ENCODE measurements at regions of chr5 and their contacts with region 1.

Region 1: DNA sequence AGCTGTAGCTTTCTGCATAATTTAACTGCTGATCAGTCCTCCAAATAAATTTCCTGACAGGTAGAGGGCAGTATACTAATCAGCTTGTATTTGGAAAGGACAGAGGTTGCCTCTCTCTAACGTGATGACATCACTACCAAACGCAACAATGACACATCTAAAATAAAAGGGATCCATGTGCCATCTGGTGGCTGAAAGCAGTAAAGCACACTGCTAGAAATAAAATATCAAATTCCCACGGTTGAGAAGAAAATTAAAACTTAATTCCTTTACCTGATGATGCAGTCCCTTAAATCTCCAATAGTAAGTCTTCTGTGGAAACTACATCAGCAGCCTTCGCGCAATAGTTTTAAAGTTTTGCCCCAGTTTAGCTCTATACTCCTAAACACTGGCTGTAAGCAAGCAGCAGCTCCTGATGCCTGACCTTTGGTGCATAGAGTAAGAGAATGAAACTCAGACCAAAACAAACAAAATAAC is 54.5 kb downstream of the DIAPH1 start:
- DNase-seq: peak; percentile 91
- ATAC-seq: peak; percentile 97
- H3K4me3 ChIP-seq: no peak overlapping the region
- H3K4me3 Mint-ChIP-seq: no peak overlapping the region
- H3K27ac ChIP-seq: peak overlapping the region; percentile 5 to 46
- H3K27ac Mint-ChIP-seq: peak overlapping the region; percentile 70
- H3K4me1 ChIP-seq: no peaks in the 10 kb centered on the region
- H3K4me1 Mint-ChIP-seq: peaks cover 4% of the 10 kb centered on the region
- H3K27me3 ChIP-seq: no peaks in the 10 kb centered on the region
- H3K27me3 Mint-ChIP-seq: no peaks in the 10 kb centered on the region
- CTCF ChIP-seq: peak; percentile 93

Region 2: DNA sequence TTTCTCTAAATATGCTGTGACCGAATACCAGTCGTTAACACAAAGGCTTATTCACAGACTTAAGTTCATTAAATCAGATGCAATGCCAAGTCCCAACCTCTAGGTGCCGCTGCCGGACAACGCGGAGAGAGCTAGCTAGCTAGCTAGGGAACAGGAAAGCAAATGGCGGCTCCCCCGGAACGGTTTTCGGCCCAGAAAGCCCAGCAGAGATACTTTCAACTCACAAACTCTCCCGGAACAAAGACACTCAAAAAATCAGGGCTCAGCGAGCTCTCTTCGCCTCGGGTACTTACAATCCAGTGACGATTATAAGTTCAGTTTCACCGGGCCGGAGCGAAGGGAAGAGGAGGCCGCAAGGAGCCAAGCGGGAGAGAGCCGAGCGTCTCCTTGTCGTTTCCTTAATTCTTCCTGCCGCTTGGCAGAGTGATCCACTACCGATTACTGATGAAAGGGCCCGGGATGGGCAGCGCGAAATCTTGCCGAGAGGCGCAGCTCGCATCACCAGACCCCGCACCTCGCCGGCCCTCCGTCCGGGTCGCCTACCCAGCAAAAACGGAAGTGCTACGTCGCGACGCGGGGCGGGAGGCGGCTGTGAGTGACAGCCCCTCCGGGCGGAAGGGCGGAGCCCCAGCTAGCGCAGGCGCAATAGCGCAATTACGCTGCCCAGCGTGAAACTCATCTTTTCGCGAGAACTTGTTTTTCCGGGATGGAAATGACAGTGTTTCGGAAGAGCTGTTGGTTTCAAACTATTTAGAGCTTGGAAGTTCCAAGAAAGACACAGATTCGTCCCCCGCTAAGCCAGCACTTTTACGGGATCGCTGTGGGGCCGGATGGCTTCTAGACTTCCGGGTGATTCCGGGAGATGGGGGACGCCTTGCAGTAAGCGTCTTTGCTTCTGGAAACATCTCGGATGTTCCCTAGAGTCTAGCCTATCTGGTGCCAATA is 243.8 kb before region 1 on chr5 and contains the start of gene TAF7:
- CTCF ChIA-PET with region 1: interaction called, 37 read pairs
- POLR2A ChIA-PET with region 1: interaction called, 6 read pairs
- intact Hi-C with region 1: loop called (anchors 1 kb)
- DNase-seq: peak; percentile 96
- ATAC-seq: peak; percentile 90
- H3K4me3 ChIP-seq: peak within 1 kb of the TSS; percentile 78 to 100 (median 97)
- H3K4me3 Mint-ChIP-seq: peak within 1 kb of the TSS; percentile 96
- H3K27ac ChIP-seq: peak within 1 kb of the TSS; percentile 95 to 96
- H3K27ac Mint-ChIP-seq: peak within 1 kb of the TSS; percentile 98
- H3K4me1 ChIP-seq: peaks cover 17 to 20% of the 10 kb centered on the region in 2 donors
- H3K4me1 Mint-ChIP-seq: peaks cover 28% of the 10 kb centered on the region
- H3K27me3 ChIP-seq: no peaks in the 10 kb centered on the region
- H3K27me3 Mint-ChIP-seq: no peaks in the 10 kb centered on the region
- CTCF ChIP-seq: peak; percentile 89
- total RNA-seq, gene TAF7: 119 TPM in 2 replicates

Region 3: GRCh38 chr5:141392429-141393198 is 171.6 kb before region 1 on chr5 and contains the start of gene PCDHGA8:
- CTCF ChIA-PET with region 1: interaction called, 13 read pairs
- POLR2A ChIA-PET with region 1: no interaction called
- intact Hi-C with region 1: no loop called
- DNase-seq: no peak
- ATAC-seq: no peak
- H3K4me3 ChIP-seq: no peak within 1 kb of the TSS
- H3K4me3 Mint-ChIP-seq: no peak within 1 kb of the TSS
- H3K27ac ChIP-seq: no peak within 1 kb of the TSS
- H3K27ac Mint-ChIP-seq: no peak within 1 kb of the TSS
- H3K4me1 ChIP-seq: no peaks in the 10 kb centered on the region
- H3K4me1 Mint-ChIP-seq: no peaks in the 10 kb centered on the region
- H3K27me3 ChIP-seq: peaks cover 0 to 61% (median 38%) of the 10 kb centered on the region in 4 experiments
- H3K27me3 Mint-ChIP-seq: peaks cover 60% of the 10 kb centered on the region
- CTCF ChIP-seq: no peak
- total RNA-seq, gene PCDHGA8: 1.2 and 1.3 TPM in 2 replicates

Region 4: GRCh38 chr5:141430332-141431113 is 133.7 kb before region 1 on chr5 and contains the start of gene PCDHGA12:
- CTCF ChIA-PET with region 1: interaction called, 31 read pairs
- POLR2A ChIA-PET with region 1: interaction called, 7 read pairs
- intact Hi-C with region 1: no loop called
- DNase-seq: peak; percentile 65
- ATAC-seq: peak; percentile 82
- H3K4me3 ChIP-seq: peak within 1 kb of the TSS in 4 of 5 experiments; percentile 30 to 35 (median 32)
- H3K4me3 Mint-ChIP-seq: peak within 1 kb of the TSS; percentile 86
- H3K27ac ChIP-seq: no peak within 1 kb of the TSS
- H3K27ac Mint-ChIP-seq: peak within 1 kb of the TSS; percentile 29
- H3K4me1 ChIP-seq: peaks cover 15 to 17% of the 10 kb centered on the region in 2 donors
- H3K4me1 Mint-ChIP-seq: peaks cover 7% of the 10 kb centered on the region
- H3K27me3 ChIP-seq: peaks cover 0 to 57% (median 30%) of the 10 kb centered on the region in 4 experiments
- H3K27me3 Mint-ChIP-seq: peaks cover 46% of the 10 kb centered on the region
- CTCF ChIP-seq: peak; percentile 68
- total RNA-seq, gene PCDHGA12: 1.6 and 2.8 TPM in 2 replicates

Region 5: GRCh38 chr5:141501761-141502160 is 62.5 kb before region 1 on chr5:
- CTCF ChIA-PET with region 1: no interaction called
- POLR2A ChIA-PET with region 1: no interaction called
- intact Hi-C with region 1: no loop called
- DNase-seq: no peak
- ATAC-seq: no peak
- H3K4me3 ChIP-seq: no peak overlapping the region
- H3K4me3 Mint-ChIP-seq: no peak overlapping the region
- H3K27ac ChIP-seq: no peak overlapping the region
- H3K27ac Mint-ChIP-seq: no peak overlapping the region
- H3K4me1 ChIP-seq: peaks cover 0 to 3% of the 10 kb centered on the region in 2 donors
- H3K4me1 Mint-ChIP-seq: peaks cover 7% of the 10 kb centered on the region
- H3K27me3 ChIP-seq: no peaks in the 10 kb centered on the region
- H3K27me3 Mint-ChIP-seq: peaks cover 6% of the 10 kb centered on the region
- CTCF ChIP-seq: no peak

Region 6: GRCh38 chr5:141598391-141599350 is 34.4 kb after region 1 on chr5:
- CTCF ChIA-PET with region 1: interaction called, 26 read pairs
- POLR2A ChIA-PET with region 1: no interaction called
- intact Hi-C with region 1: no loop called
- DNase-seq: no peak
- ATAC-seq: no peak
- H3K4me3 ChIP-seq: no peak overlapping the region
- H3K4me3 Mint-ChIP-seq: peak overlapping the region; percentile 12
- H3K27ac ChIP-seq: peak overlapping the region in 1 of 2 donors; percentile 61
- H3K27ac Mint-ChIP-seq: no peak overlapping the region
- H3K4me1 ChIP-seq: peaks cover 23 to 40% of the 10 kb centered on the region in 2 donors
- H3K4me1 Mint-ChIP-seq: peaks cover 61% of the 10 kb centered on the region
- H3K27me3 ChIP-seq: no peaks in the 10 kb centered on the region
- H3K27me3 Mint-ChIP-seq: no peaks in the 10 kb centered on the region
- CTCF ChIP-seq: no peak